ENCODE measurements at regions of chr15 and their contacts with region 1.

Region 1: DNA sequence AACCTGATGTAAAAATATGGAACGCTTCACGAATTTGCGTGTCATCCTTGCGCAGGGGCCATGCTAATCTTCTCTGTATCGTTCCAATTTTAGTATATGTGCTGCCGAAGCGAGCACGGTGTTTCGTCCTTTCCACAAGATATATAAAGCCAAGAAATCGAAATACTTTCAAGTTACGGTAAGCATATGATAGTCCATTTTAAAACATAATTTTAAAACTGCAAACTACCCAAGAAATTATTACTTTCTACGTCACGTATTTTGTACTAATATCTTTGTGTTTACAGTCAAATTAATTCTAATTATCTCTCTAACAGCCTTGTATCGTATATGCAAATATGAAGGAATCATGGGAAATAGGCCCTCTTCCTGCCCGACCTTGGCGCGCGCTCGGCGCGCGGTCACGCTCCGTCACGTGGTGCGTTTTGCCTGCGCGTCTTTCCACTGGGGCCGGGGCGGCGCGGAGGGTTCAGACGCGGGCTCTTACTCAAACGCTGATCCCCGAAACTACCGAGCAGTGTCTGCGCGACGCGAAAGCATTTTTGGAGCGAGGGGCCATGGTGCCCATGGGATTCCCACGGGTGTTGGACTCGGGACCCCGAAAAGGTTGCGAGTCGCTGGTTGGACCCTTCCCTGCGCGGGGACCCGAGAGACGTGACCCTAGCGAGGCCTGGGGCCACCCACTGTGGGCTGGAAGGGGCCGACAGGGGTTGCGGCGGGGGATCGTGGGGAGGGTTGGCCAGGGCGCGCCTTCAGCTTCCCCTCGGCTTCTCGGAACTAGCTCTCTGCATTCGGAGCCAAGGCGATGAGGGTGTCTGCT is at the start of gene RNU6-1:
- DNase-seq: peak; percentile 84
- H3K4me3 ChIP-seq: peak within 1 kb of the TSS; percentile 68 to 84 (median 74)
- H3K27ac ChIP-seq: peak within 1 kb of the TSS; percentile 93
- H3K4me1 ChIP-seq: peaks cover 26% of the 10 kb centered on the region
- H3K27me3 ChIP-seq: peaks cover 9% of the 10 kb centered on the region
- CTCF ChIP-seq: no peak
- total RNA-seq, gene RNU6-1: not detected

Region 2: DNA sequence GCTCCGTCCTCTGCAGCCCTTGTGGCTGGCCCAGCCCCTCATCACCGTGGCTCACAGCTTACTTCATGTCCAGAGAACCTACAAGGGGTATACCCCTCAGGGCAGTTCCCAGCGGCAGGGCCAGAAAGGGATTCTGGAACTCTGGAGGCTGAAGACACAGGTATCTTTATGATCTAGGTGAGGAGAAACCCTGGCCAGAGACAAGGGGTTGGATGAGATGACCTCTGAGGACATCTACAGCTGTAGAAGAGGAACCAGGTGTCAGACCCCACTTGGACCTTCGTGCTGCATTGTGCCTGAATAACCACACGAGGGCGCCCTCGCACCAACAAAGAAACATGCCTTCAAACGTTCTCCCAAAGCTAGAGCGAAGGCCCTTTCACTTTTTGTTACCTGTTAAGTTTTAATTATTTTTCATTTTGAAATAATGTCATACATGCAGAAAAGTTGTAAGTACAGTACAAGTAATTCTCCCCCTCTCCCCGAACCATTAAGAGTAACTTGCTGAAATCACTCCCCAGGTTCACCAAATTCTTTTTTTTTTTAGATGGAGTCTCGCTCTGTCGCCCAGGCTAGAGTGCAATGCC is 893.5 kb before region 1 on chr15:
- CTCF ChIA-PET with region 1: interaction called, 4 read pairs
- dilution Hi-C with region 1: no loop called
- in situ Hi-C with region 1: loop called (anchors 25 kb)
- intact Hi-C with region 1: loop called (anchors 1 kb)
- DNase-seq: peak; percentile 55
- H3K4me3 ChIP-seq: no peak overlapping the region
- H3K27ac ChIP-seq: no peak overlapping the region
- H3K4me1 ChIP-seq: no peaks in the 10 kb centered on the region
- H3K27me3 ChIP-seq: no peaks in the 10 kb centered on the region
- CTCF ChIP-seq: peak; percentile 85 to 94

Region 3: GRCh38 chr15:67240235-67241131 is 599.7 kb before region 1 on chr15:
- CTCF ChIA-PET with region 1: no interaction called
- dilution Hi-C with region 1: no loop called
- in situ Hi-C with region 1: no loop called
- intact Hi-C with region 1: loop called (anchors 10 kb)
- DNase-seq: peak; percentile 30
- H3K4me3 ChIP-seq: no peak overlapping the region
- H3K27ac ChIP-seq: peak overlapping the region; percentile 46
- H3K4me1 ChIP-seq: peaks cover 16% of the 10 kb centered on the region
- H3K27me3 ChIP-seq: no peaks in the 10 kb centered on the region
- CTCF ChIP-seq: peak; percentile 26 to 62

Region 4: GRCh38 chr15:67385971-67386370 is 454.2 kb before region 1 on chr15:
- CTCF ChIA-PET with region 1: no interaction called
- dilution Hi-C with region 1: no loop called
- in situ Hi-C with region 1: no loop called
- intact Hi-C with region 1: loop called (anchors 5 kb)
- DNase-seq: no peak
- H3K4me3 ChIP-seq: no peak overlapping the region
- H3K27ac ChIP-seq: no peak overlapping the region
- H3K4me1 ChIP-seq: no peaks in the 10 kb centered on the region
- H3K27me3 ChIP-seq: no peaks in the 10 kb centered on the region
- CTCF ChIP-seq: no peak

Region 5: DNA sequence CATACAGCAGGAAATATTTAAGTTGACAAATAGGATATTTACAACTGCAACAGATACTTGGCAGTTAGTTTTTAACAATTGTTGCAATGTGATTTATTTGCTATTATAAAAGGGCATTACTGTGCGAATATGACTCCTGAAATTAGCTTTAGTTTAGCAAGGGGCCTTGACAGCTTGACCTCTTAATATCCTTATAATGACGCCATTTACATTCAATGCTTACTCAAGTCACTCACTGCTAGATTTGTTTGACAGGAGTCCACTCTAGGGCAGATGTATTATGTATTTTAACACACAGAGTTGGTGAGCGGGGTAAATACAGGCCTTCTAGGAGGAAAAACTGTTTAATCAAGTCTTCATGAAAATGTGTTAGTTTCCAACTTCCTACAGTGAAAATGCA is 377.3 kb before region 1 on chr15:
- CTCF ChIA-PET with region 1: no interaction called
- dilution Hi-C with region 1: no loop called
- in situ Hi-C with region 1: loop called in 1 of 2 experiments (anchors 5 kb)
- intact Hi-C with region 1: no loop called
- DNase-seq: no peak
- H3K4me3 ChIP-seq: no peak overlapping the region
- H3K27ac ChIP-seq: no peak overlapping the region
- H3K4me1 ChIP-seq: peaks cover 19% of the 10 kb centered on the region
- H3K27me3 ChIP-seq: no peaks in the 10 kb centered on the region
- CTCF ChIP-seq: no peak

Region 6: DNA sequence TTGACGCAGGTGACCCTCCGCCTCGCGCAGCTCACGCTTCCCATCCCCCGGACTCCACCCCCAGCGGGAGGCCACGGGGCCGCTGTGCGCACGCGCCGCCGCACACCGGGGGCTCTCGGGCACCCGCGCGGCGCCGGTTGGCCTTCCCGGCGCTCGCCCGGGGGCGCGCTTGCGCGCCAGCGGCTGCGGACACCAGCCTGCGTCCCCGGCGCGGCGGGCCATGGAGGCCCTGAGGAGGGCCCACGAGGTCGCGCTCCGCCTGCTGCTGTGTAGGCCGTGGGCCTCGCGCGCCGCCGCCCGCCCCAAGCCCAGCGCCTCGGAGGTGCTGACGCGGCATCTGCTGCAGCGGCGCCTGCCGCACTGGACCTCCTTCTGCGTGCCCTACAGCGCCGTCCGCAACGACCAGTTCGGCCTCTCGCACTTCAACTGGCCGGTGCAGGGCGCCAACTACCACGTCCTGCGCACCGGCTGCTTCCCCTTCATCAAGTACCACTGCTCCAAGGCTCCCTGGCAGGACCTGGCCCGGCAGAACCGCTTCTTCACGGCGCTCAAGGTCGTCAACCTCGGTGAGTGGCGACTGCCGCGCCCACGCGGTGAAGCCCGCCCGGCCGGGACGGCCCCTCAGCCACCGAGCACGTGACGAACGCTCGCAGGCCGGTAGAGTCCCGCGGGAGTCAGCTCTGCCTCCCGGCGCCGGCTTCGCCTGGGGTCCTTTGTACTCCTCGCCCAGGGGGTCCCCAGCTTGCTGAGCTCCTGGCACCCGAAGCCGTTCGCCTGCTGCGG is 318.9 kb before region 1 on chr15 and contains the start of gene C15orf61:
- CTCF ChIA-PET with region 1: no interaction called
- dilution Hi-C with region 1: no loop called
- in situ Hi-C with region 1: no loop called
- intact Hi-C with region 1: loop called (anchors 5 kb)
- DNase-seq: peak; percentile 87
- H3K4me3 ChIP-seq: peak within 1 kb of the TSS; percentile 75 to 85 (median 75)
- H3K27ac ChIP-seq: peak within 1 kb of the TSS; percentile 85
- H3K4me1 ChIP-seq: peaks cover 10% of the 10 kb centered on the region
- H3K27me3 ChIP-seq: no peaks in the 10 kb centered on the region
- CTCF ChIP-seq: no peak
- total RNA-seq, gene C15orf61: 6.2 to 6.3 TPM

Region 7: DNA sequence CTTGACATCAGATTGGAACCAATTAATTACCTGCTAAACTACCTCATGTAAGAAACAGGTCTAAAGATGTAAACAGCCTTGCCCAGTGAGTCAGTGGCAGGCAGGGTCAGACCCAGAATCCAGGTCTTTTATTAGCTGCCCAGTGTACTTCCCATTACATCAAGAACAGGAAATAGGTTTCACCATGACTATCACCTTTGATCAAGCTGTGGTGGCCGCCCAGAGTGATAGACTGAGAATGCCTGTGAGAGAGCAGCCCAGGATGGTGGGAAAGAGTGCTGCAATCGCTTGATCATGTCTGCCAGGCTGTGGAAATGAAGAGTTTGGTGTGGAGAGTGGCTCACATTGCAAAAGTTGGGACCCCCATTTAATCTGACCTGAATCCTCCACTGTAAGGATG is 152.7 kb after region 1 on chr15:
- CTCF ChIA-PET with region 1: no interaction called
- dilution Hi-C with region 1: no loop called
- in situ Hi-C with region 1: no loop called
- intact Hi-C with region 1: no loop called
- DNase-seq: peak; percentile 54
- H3K4me3 ChIP-seq: no peak overlapping the region
- H3K27ac ChIP-seq: no peak overlapping the region
- H3K4me1 ChIP-seq: peaks cover 2% of the 10 kb centered on the region
- H3K27me3 ChIP-seq: no peaks in the 10 kb centered on the region
- CTCF ChIP-seq: no peak

Region 8: GRCh38 chr15:68154923-68155559 is 314.9 kb after region 1 on chr15:
- CTCF ChIA-PET with region 1: no interaction called
- dilution Hi-C with region 1: no loop called
- in situ Hi-C with region 1: no loop called
- intact Hi-C with region 1: loop called (anchors 1 kb)
- DNase-seq: peak; percentile 42
- H3K4me3 ChIP-seq: no peak overlapping the region
- H3K27ac ChIP-seq: no peak overlapping the region
- H3K4me1 ChIP-seq: no peaks in the 10 kb centered on the region
- H3K27me3 ChIP-seq: no peaks in the 10 kb centered on the region
- CTCF ChIP-seq: peak; percentile 66 to 76

Measured in mammary epithelial cell (primary cell).